Thyroid gland (tissue), 4 donors: ENCODE measurements at regions of chr1 and their contacts with region 1.

Region 1: DNA sequence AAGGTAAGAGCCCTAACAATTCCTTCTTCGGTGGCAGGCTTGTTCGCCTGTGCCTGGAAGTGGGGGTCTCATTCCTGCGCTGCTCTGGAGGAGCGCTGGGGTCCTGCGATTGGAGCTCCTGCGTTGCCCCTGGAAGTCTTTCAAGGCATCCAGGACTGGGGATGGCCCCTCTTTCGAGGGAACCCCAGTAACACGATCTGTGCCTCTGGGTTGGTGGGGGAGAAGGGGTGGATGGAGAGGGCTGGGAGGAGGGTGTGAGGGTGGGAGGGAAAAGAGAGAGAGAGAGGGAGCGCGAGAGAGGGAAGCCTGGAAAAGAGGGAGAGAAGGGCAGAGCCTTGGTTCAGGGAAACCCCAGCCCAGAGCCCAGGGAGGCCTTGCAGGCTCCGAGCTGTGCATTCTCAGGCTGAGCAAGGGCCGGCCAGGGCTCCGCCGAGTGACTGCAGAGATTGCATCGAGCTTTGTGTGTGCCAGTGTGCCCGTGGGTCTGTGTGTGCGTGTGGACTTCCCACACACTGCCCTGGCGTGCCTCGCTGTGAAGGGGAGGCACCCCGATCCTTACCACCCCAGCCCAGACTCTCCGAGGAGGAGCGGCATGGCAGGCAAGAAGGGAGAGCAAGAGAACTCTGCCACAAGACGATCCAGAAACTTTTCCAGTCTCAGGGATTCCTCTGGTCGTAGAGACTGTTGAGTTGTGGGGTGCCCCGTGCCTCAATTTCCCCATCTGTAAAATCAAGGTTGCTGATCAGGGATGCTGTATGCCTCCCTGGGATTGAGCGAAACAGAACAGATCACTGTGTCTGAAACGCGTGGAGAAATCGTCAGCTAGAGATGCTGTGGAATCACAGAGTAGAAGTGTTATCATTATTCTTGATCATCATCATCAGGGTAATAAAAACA is 619 bp downstream of the BCL9 start:
- DNase-seq: peak; percentile 54 to 57
- H3K4me3 ChIP-seq: peak overlapping the region; percentile 23 to 87 (median 57)
- H3K27ac ChIP-seq: peak overlapping the region; percentile 86 to 97 (median 96)
- H3K4me1 ChIP-seq: peaks cover 30 to 55% of the 10 kb centered on the region in 2 donors
- H3K27me3 ChIP-seq: no peaks in the 10 kb centered on the region
- CTCF ChIP-seq: peak in 1 of 6 experiments; percentile 7
- POLR2A ChIP-seq: peak in 1 of 2 donors; percentile 45

Region 2: GRCh38 chr1:147142886-147143285 is 399.0 kb before region 1 on chr1:
- intact Hi-C with region 1: no loop called
- DNase-seq: no peak
- H3K4me3 ChIP-seq: no peak overlapping the region
- H3K27ac ChIP-seq: no peak overlapping the region
- H3K4me1 ChIP-seq: no peaks in the 10 kb centered on the region
- H3K27me3 ChIP-seq: no peaks in the 10 kb centered on the region
- CTCF ChIP-seq: no peak
- POLR2A ChIP-seq: no peak

Region 3: GRCh38 chr1:147599362-147600118 is 57.6 kb after region 1 on chr1:
- intact Hi-C with region 1: loop called (anchors 2 kb)
- DNase-seq: peak; percentile 97 to 98
- H3K4me3 ChIP-seq: peak overlapping the region; percentile 17 to 66 (median 58)
- H3K27ac ChIP-seq: peak overlapping the region; percentile 77 to 88 (median 86)
- H3K4me1 ChIP-seq: peaks cover 6 to 12% of the 10 kb centered on the region in 2 donors
- H3K27me3 ChIP-seq: no peaks in the 10 kb centered on the region
- CTCF ChIP-seq: no peak
- POLR2A ChIP-seq: peak in 1 of 2 donors; percentile 92